ENCODE measurements at regions of chr11 and their contacts with region 1.

Region 1: DNA sequence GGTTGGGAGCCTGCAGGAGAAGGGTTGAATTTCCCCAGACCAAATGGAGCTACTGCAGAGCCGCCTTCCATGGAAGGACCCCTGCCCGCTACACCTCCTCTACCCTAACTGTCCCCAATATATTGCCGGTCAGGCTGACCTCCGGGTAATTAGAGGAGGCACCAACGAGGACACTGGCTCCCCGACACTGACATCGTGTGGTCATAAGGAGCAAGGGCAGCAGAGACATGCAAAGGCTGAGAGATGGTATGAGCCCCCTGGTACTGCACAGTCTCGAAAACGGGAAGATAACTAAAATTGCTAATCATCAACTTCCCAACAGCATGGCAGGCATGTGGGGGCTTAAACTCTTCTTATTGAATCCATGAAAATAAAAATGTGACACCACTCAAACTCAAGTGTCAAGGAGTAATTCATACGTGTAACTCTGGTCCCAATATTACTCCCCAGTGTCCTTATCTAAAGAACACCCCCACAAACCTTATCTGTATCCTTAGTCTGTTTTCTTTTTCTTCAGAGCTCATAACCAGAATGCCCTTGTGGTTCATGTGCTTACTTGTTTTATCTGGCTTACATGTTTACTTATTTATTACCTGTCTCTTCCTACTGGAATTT is 4.4 kb downstream of the CAVIN3 start:
- DNase-seq: peak; percentile 63 to 86
- H3K4me3 ChIP-seq: no peak overlapping the region
- H3K27ac ChIP-seq: peak overlapping the region in 1 of 5 donors; percentile 96
- H3K4me1 ChIP-seq: peaks cover 18 to 52% (median 40%) of the 10 kb centered on the region in 4 donors
- H3K27me3 ChIP-seq: peaks cover 0 to 19% (median 6%) of the 10 kb centered on the region in 3 donors
- CTCF ChIP-seq: peak in 5 of 7 experiments; percentile 75 to 88 (median 79)
- EP300 ChIP-seq: no peak
- POLR2A ChIP-seq: no peak

Region 2: GRCh38 chr11:6253197-6253596 is 62.7 kb before region 1 on chr11:
- intact Hi-C with region 1: no loop called
- DNase-seq: no peak
- H3K4me3 ChIP-seq: no peak overlapping the region
- H3K27ac ChIP-seq: peak overlapping the region; percentile 83 to 92 (median 90)
- H3K4me1 ChIP-seq: peaks cover 27 to 50% (median 37%) of the 10 kb centered on the region in 4 donors
- H3K27me3 ChIP-seq: peaks cover 0 to 19% (median 2%) of the 10 kb centered on the region in 3 donors
- CTCF ChIP-seq: no peak
- EP300 ChIP-seq: no peak
- POLR2A ChIP-seq: no peak

Region 3: GRCh38 chr11:6269994-6270393 is 45.9 kb before region 1 on chr11:
- intact Hi-C with region 1: loop called (anchors 10 kb)
- DNase-seq: no peak
- H3K4me3 ChIP-seq: no peak overlapping the region
- H3K27ac ChIP-seq: no peak overlapping the region
- H3K4me1 ChIP-seq: no peaks in the 10 kb centered on the region
- H3K27me3 ChIP-seq: peaks cover 0 to 12% (median 0%) of the 10 kb centered on the region in 3 donors
- CTCF ChIP-seq: no peak
- EP300 ChIP-seq: no peak
- POLR2A ChIP-seq: no peak